Vagina (tissue), 2 donors: ENCODE measurements at regions of chr12 and their contacts with region 1.

Region 1: GRCh38 chr12:121626087-121626852 is at the start of gene ORAI1:
- DNase-seq: peak in 1 of 2 donors; percentile 95
- H3K4me3 ChIP-seq: peak within 1 kb of the TSS; percentile 84
- H3K27ac ChIP-seq: peak within 1 kb of the TSS; percentile 94
- H3K4me1 ChIP-seq: peaks cover 53% of the 10 kb centered on the region
- H3K27me3 ChIP-seq: no peaks in the 10 kb centered on the region
- CTCF ChIP-seq: no peak
- POLR2A ChIP-seq: peak in 1 of 2 donors; percentile 73
- total RNA-seq, gene ORAI1: 18.2 TPM

Region 2: DNA sequence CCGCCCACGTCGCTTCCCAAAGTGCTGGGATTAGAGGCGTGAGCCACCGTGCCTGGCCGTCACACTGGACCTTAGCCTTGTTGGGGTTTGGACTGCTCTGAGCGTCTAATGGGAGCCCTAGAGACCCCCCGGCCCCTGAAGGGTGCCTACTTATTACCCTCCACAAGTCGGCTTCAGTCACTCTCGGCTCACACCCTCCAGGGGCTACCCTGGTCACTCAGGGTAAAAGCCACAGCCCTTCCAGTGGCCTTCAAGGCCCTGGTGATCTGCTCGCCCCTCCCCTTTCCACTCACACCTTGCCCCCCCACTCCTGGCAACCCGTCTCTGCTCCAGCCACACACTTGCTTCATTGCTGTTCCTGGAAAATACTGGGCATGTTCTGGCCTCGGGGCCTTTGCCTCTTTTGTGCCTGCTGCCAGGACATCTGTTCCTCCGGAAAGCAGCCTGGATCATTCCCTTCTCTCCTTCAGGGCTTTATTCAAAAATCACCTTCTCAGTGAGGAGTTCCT is 46.8 kb after region 1 on chr12:
- intact Hi-C with region 1: loop called (anchors 5 kb)
- DNase-seq: no peak
- H3K4me3 ChIP-seq: peak overlapping the region; percentile 54 to 55
- H3K27ac ChIP-seq: peak overlapping the region; percentile 70
- H3K4me1 ChIP-seq: peaks cover 17% of the 10 kb centered on the region
- H3K27me3 ChIP-seq: no peaks in the 10 kb centered on the region
- CTCF ChIP-seq: no peak
- POLR2A ChIP-seq: no peak